ENCODE measurements at regions of chr10 and their contacts with region 1.

Region 1: GRCh38 chr10:28241741-28242399 is 61.0 kb downstream of the MPP7 start:
- DNase-seq: no peak
- H3K4me3 ChIP-seq: no peak overlapping the region
- H3K27ac ChIP-seq: no peak overlapping the region
- H3K4me1 ChIP-seq: no peaks in the 10 kb centered on the region
- H3K27me3 ChIP-seq: peaks cover 23% of the 10 kb centered on the region
- CTCF ChIP-seq: peak; percentile 88

Region 2: GRCh38 chr10:26890956-26891355 is 1350.9 kb before region 1 on chr10:
- CTCF ChIA-PET with region 1: no interaction called
- POLR2A ChIA-PET with region 1: no interaction called
- intact Hi-C with region 1: loop called (anchors 10 kb)
- DNase-seq: peak; percentile 41 to 51
- H3K4me3 ChIP-seq: no peak overlapping the region
- H3K27ac ChIP-seq: no peak overlapping the region
- H3K4me1 ChIP-seq: no peaks in the 10 kb centered on the region
- H3K27me3 ChIP-seq: no peaks in the 10 kb centered on the region
- CTCF ChIP-seq: peak; percentile 69

Region 3: GRCh38 chr10:27369880-27370279 is 872.0 kb before region 1 on chr10:
- CTCF ChIA-PET with region 1: no interaction called
- POLR2A ChIA-PET with region 1: no interaction called
- intact Hi-C with region 1: loop called (anchors 5 kb)
- DNase-seq: no peak
- H3K4me3 ChIP-seq: no peak overlapping the region
- H3K27ac ChIP-seq: no peak overlapping the region
- H3K4me1 ChIP-seq: no peaks in the 10 kb centered on the region
- H3K27me3 ChIP-seq: peaks cover 17% of the 10 kb centered on the region; the same call in 1 of the 2 replicates
- CTCF ChIP-seq: peak; percentile 55

Region 4: DNA sequence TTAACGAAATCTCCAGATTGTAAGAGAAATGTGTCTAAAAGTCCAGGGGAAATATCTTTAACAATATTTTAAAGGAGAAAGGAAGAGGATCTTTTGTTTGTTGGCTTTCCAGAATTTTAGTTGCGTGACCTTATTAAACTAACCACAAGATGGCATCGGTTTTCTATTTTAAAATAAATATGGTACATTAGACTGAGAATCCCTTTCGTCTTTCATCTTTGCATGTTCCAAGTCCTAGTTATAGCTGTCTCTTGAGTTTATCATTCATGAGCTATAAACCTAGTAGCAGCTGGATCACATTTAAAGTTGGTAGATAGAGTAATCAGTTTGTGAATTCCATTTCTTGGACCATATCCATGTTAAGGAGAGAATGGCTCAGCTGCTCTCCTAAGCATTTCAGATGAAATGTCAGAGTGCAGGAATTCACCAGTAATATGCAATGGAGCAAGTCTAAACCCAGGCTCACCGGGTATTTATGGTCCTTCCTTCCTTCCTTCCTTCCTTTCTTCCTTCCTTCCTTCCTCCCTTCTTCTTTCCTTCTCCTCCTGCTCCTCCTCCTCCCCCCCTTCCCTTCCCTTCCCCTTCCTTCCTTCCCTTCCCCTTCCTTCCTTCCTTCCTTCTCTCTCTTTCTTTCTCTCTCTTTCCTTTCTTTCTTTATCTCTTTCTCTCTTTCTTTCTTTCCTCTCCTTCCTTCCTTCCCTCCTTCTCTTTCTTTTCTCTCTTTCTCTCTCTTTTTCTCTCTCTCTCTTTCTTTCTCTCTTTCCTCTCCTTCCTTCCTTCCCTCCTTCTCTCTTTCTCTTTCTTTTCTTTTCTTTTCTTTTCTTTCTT is 795.6 kb before region 1 on chr10:
- CTCF ChIA-PET with region 1: no interaction called
- POLR2A ChIA-PET with region 1: no interaction called
- intact Hi-C with region 1: loop called (anchors 5 kb)
- DNase-seq: no peak
- H3K4me3 ChIP-seq: no peak overlapping the region
- H3K27ac ChIP-seq: no peak overlapping the region
- H3K4me1 ChIP-seq: no peaks in the 10 kb centered on the region
- H3K27me3 ChIP-seq: no peaks in the 10 kb centered on the region
- CTCF ChIP-seq: peak; percentile 52

Region 5: GRCh38 chr10:27558612-27559020 is 683.3 kb before region 1 on chr10:
- CTCF ChIA-PET with region 1: interaction called, 4 read pairs
- POLR2A ChIA-PET with region 1: interaction called, 4 read pairs
- intact Hi-C with region 1: loop called (anchors 2 kb)
- DNase-seq: peak; percentile 19 to 35
- H3K4me3 ChIP-seq: no peak overlapping the region
- H3K27ac ChIP-seq: no peak overlapping the region
- H3K4me1 ChIP-seq: no peaks in the 10 kb centered on the region
- H3K27me3 ChIP-seq: no peaks in the 10 kb centered on the region
- CTCF ChIP-seq: peak; percentile 72